Activated CD4-positive, alpha-beta memory T cell treated with anti-CD3 and anti-CD28 coated beads, Interleukin-2, amount 10 ng/mL, durations not matched to agents 7 days and 5 days (primary cell): ENCODE measurements at regions of chr10 and their contacts with region 1.

Region 1: DNA sequence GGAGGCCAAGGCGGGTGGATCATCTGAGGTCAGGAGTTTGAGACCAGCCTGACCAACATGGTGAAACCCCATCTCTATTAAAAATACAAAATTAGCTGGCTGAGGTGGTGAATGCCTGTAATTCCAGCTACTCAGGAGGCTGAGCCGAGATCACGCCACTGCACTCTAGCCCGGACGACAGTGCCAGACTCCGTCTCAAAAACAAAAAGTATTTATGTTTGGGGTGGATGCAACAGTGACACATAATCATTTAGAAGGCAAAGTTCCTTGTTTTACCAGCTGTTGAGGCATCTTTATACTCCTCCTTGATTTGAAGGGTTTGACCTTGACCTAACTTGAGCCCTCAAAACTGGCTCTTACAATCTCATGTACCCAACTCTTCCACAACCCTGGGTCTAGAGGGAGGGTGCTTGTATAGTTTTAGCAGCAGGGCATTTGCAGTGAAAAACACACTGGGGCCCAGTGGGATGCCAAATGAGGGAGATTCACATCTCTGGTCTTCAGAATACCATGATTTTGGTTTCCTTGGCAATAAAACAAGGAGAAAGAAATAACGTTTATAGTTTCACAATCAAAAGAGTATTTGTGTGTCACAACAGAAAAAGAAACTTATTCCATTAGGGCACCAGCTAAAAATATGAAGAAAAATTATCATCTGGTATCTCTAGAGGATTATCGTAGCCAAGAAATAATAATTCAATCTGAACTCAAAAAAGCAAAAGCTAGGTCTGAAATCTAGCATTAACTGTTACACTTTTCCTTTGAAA is 14.2 kb upstream of the TMEM254 start:
- DNase-seq: no peak
- H3K4me3 Mint-ChIP-seq: no peak overlapping the region
- H3K27ac Mint-ChIP-seq: no peak overlapping the region
- H3K4me1 Mint-ChIP-seq: no peaks in the 10 kb centered on the region
- H3K27me3 Mint-ChIP-seq: peaks cover 5% of the 10 kb centered on the region

Region 2: DNA sequence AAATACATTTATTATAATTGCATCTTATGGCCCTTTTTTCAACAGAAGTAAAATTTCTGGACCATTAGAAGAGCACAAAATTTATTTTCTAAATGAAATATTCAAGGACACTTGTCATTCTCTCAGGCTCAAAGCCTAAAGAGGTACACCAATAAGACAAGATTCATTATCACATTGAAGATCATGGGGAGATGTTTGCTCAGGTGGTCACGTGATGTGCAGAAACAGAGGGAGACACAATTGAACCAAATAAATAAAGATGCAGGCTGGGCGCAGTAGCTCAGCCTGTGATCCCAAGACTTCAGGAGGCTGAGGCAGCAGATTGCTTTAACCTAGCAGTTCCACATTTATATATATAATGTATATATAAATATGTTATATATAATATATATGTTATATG is 39.0 kb before region 1 on chr10:
- CTCF ChIA-PET with region 1: no interaction called
- POLR2A ChIA-PET with region 1: no interaction called
- DNase-seq: no peak
- H3K4me3 Mint-ChIP-seq: no peak overlapping the region
- H3K27ac Mint-ChIP-seq: no peak overlapping the region
- H3K4me1 Mint-ChIP-seq: peaks cover 2% of the 10 kb centered on the region
- H3K27me3 Mint-ChIP-seq: peaks cover 3% of the 10 kb centered on the region

Region 3: GRCh38 chr10:80046629-80047441 is 17.5 kb before region 1 on chr10:
- CTCF ChIA-PET with region 1: interaction called, 14 read pairs
- POLR2A ChIA-PET with region 1: no interaction called
- DNase-seq: peak; percentile 72
- H3K4me3 Mint-ChIP-seq: no peak overlapping the region
- H3K27ac Mint-ChIP-seq: no peak overlapping the region
- H3K4me1 Mint-ChIP-seq: no peaks in the 10 kb centered on the region
- H3K27me3 Mint-ChIP-seq: peaks cover 3% of the 10 kb centered on the region

Region 4: GRCh38 chr10:80260295-80261243 is 196.3 kb after region 1 on chr10:
- CTCF ChIA-PET with region 1: interaction called, 15 read pairs
- POLR2A ChIA-PET with region 1: no interaction called
- DNase-seq: peak; percentile 41
- H3K4me3 Mint-ChIP-seq: no peak overlapping the region
- H3K27ac Mint-ChIP-seq: no peak overlapping the region
- H3K4me1 Mint-ChIP-seq: no peaks in the 10 kb centered on the region
- H3K27me3 Mint-ChIP-seq: peaks cover 13% of the 10 kb centered on the region